CD4-positive, alpha-beta T cell (primary cell): ENCODE measurements at regions of chr4 and their contacts with region 1.

Region 1: GRCh38 chr4:109559983-109560686 is at the start of gene MCUB:
- DNase-seq: peak; percentile 84 to 97 (median 90)
- ATAC-seq: peak; percentile 88
- H3K4me3 ChIP-seq: peak within 1 kb of the TSS; percentile 98
- H3K4me3 Mint-ChIP-seq: peak within 1 kb of the TSS; percentile 94
- H3K27ac ChIP-seq: peak within 1 kb of the TSS; percentile 95 to 96
- H3K27ac Mint-ChIP-seq: peak within 1 kb of the TSS; percentile 93
- H3K4me1 ChIP-seq: peaks cover 43% of the 10 kb centered on the region
- H3K4me1 Mint-ChIP-seq: peaks cover 71% of the 10 kb centered on the region
- H3K27me3 ChIP-seq: no peaks in the 10 kb centered on the region
- H3K27me3 Mint-ChIP-seq: no peaks in the 10 kb centered on the region
- CTCF ChIP-seq: no peak
- total RNA-seq, gene MCUB: 98.1 to 108 TPM

Region 2: GRCh38 chr4:108080747-108081146 is 1479.4 kb before region 1 on chr4:
- CTCF ChIA-PET with region 1: no interaction called
- POLR2A ChIA-PET with region 1: no interaction called
- intact Hi-C with region 1: no loop called
- DNase-seq: peak; percentile 35 to 77 (median 62)
- ATAC-seq: peak; percentile 84
- H3K4me3 ChIP-seq: no peak overlapping the region
- H3K4me3 Mint-ChIP-seq: peak overlapping the region; percentile 77
- H3K27ac ChIP-seq: peak overlapping the region in 1 of 2 donors; percentile 68
- H3K27ac Mint-ChIP-seq: peak overlapping the region; percentile 95
- H3K4me1 ChIP-seq: peaks cover 14% of the 10 kb centered on the region
- H3K4me1 Mint-ChIP-seq: peaks cover 78% of the 10 kb centered on the region
- H3K27me3 ChIP-seq: no peaks in the 10 kb centered on the region
- H3K27me3 Mint-ChIP-seq: no peaks in the 10 kb centered on the region
- CTCF ChIP-seq: no peak

Region 3: DNA sequence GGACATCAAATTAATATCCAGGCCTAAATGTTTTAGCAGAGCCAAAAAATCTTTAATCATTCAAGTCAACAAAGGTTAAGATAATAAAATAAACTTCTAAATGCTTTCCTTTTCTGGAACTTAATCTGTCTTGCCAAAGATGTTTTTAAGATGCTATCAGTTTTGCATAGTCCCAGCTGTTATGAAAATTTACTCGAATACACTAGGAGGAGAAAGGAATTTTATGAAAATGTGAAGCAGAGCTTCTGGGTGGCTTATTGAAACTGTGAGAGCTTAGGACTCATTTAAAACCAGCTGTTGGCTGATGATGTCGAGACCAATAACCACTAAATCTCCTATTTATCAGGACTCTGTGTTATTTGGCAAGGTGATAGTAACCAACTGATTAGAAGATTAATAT is 595.1 kb before region 1 on chr4:
- CTCF ChIA-PET with region 1: no interaction called
- POLR2A ChIA-PET with region 1: no interaction called
- intact Hi-C with region 1: no loop called
- DNase-seq: no peak
- ATAC-seq: no peak
- H3K4me3 ChIP-seq: no peak overlapping the region
- H3K4me3 Mint-ChIP-seq: no peak overlapping the region
- H3K27ac ChIP-seq: no peak overlapping the region
- H3K27ac Mint-ChIP-seq: no peak overlapping the region
- H3K4me1 ChIP-seq: no peaks in the 10 kb centered on the region
- H3K4me1 Mint-ChIP-seq: no peaks in the 10 kb centered on the region
- H3K27me3 ChIP-seq: no peaks in the 10 kb centered on the region
- H3K27me3 Mint-ChIP-seq: no peaks in the 10 kb centered on the region
- CTCF ChIP-seq: no peak

Region 4: GRCh38 chr4:109218288-109218687 is 341.8 kb before region 1 on chr4:
- CTCF ChIA-PET with region 1: no interaction called
- POLR2A ChIA-PET with region 1: no interaction called
- intact Hi-C with region 1: no loop called
- DNase-seq: no peak
- ATAC-seq: no peak
- H3K4me3 ChIP-seq: no peak overlapping the region
- H3K4me3 Mint-ChIP-seq: no peak overlapping the region
- H3K27ac ChIP-seq: no peak overlapping the region
- H3K27ac Mint-ChIP-seq: no peak overlapping the region
- H3K4me1 ChIP-seq: no peaks in the 10 kb centered on the region
- H3K4me1 Mint-ChIP-seq: no peaks in the 10 kb centered on the region
- H3K27me3 ChIP-seq: peaks cover 0 to 7% of the 10 kb centered on the region in 2 experiments
- H3K27me3 Mint-ChIP-seq: peaks cover 7% of the 10 kb centered on the region
- CTCF ChIP-seq: no peak

Region 5: DNA sequence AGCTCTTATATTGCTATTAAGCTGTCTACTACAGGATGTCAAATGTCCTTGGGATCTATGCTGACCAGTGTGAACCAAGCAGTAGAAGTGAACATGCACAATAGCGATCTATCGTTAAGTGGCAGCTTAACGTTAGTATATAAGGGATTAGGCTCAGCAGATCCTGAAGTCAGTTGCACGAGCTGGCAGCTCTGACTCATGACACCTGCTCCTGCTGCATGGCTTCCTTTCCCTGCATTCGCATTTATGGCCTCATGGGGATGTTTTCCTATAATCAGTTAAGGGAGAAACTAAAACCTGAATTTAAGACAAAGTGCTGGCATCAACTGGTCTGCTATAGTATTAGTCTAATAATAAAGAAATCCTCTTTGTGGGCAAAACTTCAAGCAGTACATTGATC is 12.7 kb before region 1 on chr4:
- CTCF ChIA-PET with region 1: interaction called, 7 read pairs
- POLR2A ChIA-PET with region 1: interaction called, 14 read pairs
- intact Hi-C with region 1: no loop called
- DNase-seq: no peak
- ATAC-seq: no peak
- H3K4me3 ChIP-seq: no peak overlapping the region
- H3K4me3 Mint-ChIP-seq: no peak overlapping the region
- H3K27ac ChIP-seq: no peak overlapping the region
- H3K27ac Mint-ChIP-seq: no peak overlapping the region
- H3K4me1 ChIP-seq: peaks cover 6% of the 10 kb centered on the region
- H3K4me1 Mint-ChIP-seq: peaks cover 40% of the 10 kb centered on the region
- H3K27me3 ChIP-seq: no peaks in the 10 kb centered on the region
- H3K27me3 Mint-ChIP-seq: no peaks in the 10 kb centered on the region
- CTCF ChIP-seq: no peak

Region 6: DNA sequence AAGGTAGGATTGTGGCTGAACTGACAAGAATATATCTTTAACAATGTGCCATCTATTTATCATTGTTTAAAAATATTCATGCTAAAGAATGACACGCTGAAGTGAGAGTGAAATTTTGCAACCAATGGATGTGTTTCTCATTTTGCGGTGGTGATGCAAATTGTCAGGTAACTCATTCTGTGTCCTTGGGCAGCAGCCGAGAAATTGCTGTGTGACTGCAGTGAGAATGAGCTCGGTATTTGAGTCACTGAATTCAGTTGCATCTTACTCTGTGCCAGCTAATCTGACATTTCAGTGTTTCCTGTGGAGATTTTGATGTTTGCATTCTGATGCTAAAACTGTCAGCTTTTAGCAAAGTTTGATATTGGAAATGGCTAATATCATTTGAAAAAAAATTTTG is 28.0 kb after region 1 on chr4:
- CTCF ChIA-PET with region 1: no interaction called
- POLR2A ChIA-PET with region 1: interaction called, 17 read pairs
- intact Hi-C with region 1: loop called in 1 of 2 experiments (anchors 2 kb)
- DNase-seq: peak in 10 of 14 experiments; percentile 5 to 62 (median 16)
- ATAC-seq: peak; percentile 86
- H3K4me3 ChIP-seq: no peak overlapping the region
- H3K4me3 Mint-ChIP-seq: peak overlapping the region; percentile 30
- H3K27ac ChIP-seq: no peak overlapping the region
- H3K27ac Mint-ChIP-seq: peak overlapping the region; percentile 67
- H3K4me1 ChIP-seq: peaks cover 17% of the 10 kb centered on the region
- H3K4me1 Mint-ChIP-seq: peaks cover 84% of the 10 kb centered on the region
- H3K27me3 ChIP-seq: no peaks in the 10 kb centered on the region
- H3K27me3 Mint-ChIP-seq: no peaks in the 10 kb centered on the region
- CTCF ChIP-seq: no peak

Region 7: DNA sequence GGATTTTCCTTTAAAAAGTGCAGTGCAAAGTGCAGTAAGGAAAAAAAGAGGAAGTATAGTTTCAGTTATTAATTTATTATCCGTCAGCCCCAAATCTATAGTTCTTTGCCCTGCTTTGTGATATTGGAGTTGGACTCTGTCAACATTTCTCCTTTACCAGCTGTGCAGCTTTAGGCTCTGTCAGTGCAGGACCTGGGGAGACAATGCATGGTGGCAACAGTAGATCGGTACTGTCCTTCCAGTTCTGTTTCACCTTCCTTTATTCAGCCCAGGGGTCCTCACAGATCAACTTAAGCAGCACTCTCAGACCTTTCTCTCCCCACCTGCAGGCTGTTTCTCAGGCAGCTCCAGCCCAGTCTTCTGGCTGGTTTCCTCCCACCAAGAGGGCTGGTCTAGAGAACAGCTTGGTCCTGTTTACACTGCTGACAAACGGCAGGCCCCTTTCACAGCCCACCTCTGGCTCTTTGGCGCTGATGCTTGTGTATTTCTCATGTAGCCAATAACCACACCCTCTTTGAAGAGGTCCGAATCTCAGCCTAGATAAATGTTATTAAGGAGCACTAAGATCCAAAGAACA is 71.5 kb after region 1 on chr4:
- CTCF ChIA-PET with region 1: no interaction called
- POLR2A ChIA-PET with region 1: interaction called, 31 read pairs
- intact Hi-C with region 1: no loop called
- DNase-seq: peak in 1 of 14 experiments; percentile 2
- ATAC-seq: peak; percentile 56
- H3K4me3 ChIP-seq: no peak overlapping the region
- H3K4me3 Mint-ChIP-seq: peak overlapping the region; percentile 21
- H3K27ac ChIP-seq: no peak overlapping the region
- H3K27ac Mint-ChIP-seq: peak overlapping the region; percentile 76
- H3K4me1 ChIP-seq: peaks cover 12% of the 10 kb centered on the region
- H3K4me1 Mint-ChIP-seq: peaks cover 76% of the 10 kb centered on the region
- H3K27me3 ChIP-seq: no peaks in the 10 kb centered on the region
- H3K27me3 Mint-ChIP-seq: no peaks in the 10 kb centered on the region
- CTCF ChIP-seq: no peak

Region 8: GRCh38 chr4:109648266-109648996 is 88.3 kb after region 1 on chr4:
- CTCF ChIA-PET with region 1: no interaction called
- POLR2A ChIA-PET with region 1: interaction called, 108 read pairs
- intact Hi-C with region 1: loop called (anchors 1 to 5 kb)
- DNase-seq: peak in 5 of 14 experiments; percentile 25 to 88 (median 83)
- ATAC-seq: peak; percentile 86
- H3K4me3 ChIP-seq: peak overlapping the region; percentile 22
- H3K4me3 Mint-ChIP-seq: peak overlapping the region; percentile 85
- H3K27ac ChIP-seq: peak overlapping the region; percentile 70 to 74
- H3K27ac Mint-ChIP-seq: no peak overlapping the region
- H3K4me1 ChIP-seq: peaks cover 49% of the 10 kb centered on the region
- H3K4me1 Mint-ChIP-seq: no peaks in the 10 kb centered on the region
- H3K27me3 ChIP-seq: no peaks in the 10 kb centered on the region
- H3K27me3 Mint-ChIP-seq: no peaks in the 10 kb centered on the region
- CTCF ChIP-seq: no peak

Region 9: GRCh38 chr4:109702950-109703663 is 143.0 kb after region 1 on chr4 and contains the start of gene CASP6:
- CTCF ChIA-PET with region 1: interaction called, 3 read pairs
- POLR2A ChIA-PET with region 1: interaction called, 46 read pairs
- intact Hi-C with region 1: loop called (anchors 1 to 2 kb)
- DNase-seq: peak; percentile 62 to 90 (median 73)
- ATAC-seq: peak; percentile 90
- H3K4me3 ChIP-seq: peak within 1 kb of the TSS; percentile 80
- H3K4me3 Mint-ChIP-seq: peak within 1 kb of the TSS; percentile 97
- H3K27ac ChIP-seq: peak within 1 kb of the TSS; percentile 39 to 60
- H3K27ac Mint-ChIP-seq: peak within 1 kb of the TSS; percentile 96
- H3K4me1 ChIP-seq: peaks cover 33% of the 10 kb centered on the region
- H3K4me1 Mint-ChIP-seq: peaks cover 50% of the 10 kb centered on the region
- H3K27me3 ChIP-seq: no peaks in the 10 kb centered on the region
- H3K27me3 Mint-ChIP-seq: no peaks in the 10 kb centered on the region
- CTCF ChIP-seq: peak; percentile 78
- total RNA-seq, gene CASP6: 5.4 to 5.5 TPM

Region 10: DNA sequence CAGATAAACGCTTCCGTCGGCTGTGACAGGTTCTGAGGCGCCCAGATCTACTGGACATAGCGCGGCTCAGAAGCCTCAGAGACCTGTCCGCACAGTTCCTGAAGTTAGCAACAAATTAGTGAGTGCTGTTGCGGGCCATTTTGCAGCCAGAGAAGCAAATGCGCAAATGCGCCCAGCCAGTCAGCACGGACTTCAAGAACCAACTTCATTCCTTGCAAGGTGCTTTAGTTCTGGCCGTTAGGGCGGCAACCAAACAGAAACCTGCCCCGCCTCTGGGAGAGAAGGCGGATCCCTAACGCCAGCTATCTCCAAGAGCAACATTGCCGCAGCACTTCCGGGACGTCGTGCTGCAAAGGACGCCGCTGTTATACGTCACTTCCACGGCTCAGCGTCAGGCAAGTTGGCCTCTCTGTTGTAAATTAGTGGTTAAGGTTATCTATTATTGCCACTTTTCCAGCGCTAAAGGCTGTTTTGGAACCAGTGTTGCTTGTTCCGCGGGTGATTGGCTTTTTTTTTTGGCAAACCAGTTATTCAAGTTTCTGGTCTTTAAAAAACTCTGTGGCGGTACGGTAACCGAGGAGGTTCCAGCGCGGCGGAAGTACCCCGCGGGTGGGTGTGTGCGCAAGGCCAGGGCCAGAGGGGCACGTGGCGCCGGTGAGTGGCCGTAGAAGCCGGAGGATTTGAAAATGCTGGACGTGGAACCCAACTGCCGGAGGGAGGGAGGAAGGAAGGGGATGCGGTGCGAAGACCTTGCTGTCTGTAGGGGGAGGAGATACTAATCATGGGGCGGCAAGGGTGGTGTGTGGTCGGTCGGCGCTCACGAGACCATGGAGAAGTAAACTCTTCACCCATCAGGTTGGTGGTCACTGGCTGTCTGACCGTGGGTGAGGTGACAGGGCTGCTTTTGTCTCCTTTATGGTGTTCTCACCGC is 255.3 kb after region 1 on chr4 and contains the start of gene GAR1:
- CTCF ChIA-PET with region 1: no interaction called
- POLR2A ChIA-PET with region 1: interaction called, 5 read pairs
- intact Hi-C with region 1: loop called in 1 of 2 experiments (anchors 2 kb)
- DNase-seq: peak; percentile 68 to 96 (median 82)
- ATAC-seq: peak; percentile 91
- H3K4me3 ChIP-seq: peak within 1 kb of the TSS; percentile 67
- H3K4me3 Mint-ChIP-seq: peak within 1 kb of the TSS; percentile 96
- H3K27ac ChIP-seq: peak within 1 kb of the TSS; percentile 90 to 96
- H3K27ac Mint-ChIP-seq: peak within 1 kb of the TSS; percentile 98
- H3K4me1 ChIP-seq: peaks cover 18% of the 10 kb centered on the region
- H3K4me1 Mint-ChIP-seq: peaks cover 42% of the 10 kb centered on the region
- H3K27me3 ChIP-seq: no peaks in the 10 kb centered on the region
- H3K27me3 Mint-ChIP-seq: no peaks in the 10 kb centered on the region
- CTCF ChIP-seq: no peak
- total RNA-seq, gene GAR1: 8.4 to 9.6 TPM